GM12878 (cell line): ENCODE measurements at regions of chrX and their contacts with region 1.

Region 1: DNA sequence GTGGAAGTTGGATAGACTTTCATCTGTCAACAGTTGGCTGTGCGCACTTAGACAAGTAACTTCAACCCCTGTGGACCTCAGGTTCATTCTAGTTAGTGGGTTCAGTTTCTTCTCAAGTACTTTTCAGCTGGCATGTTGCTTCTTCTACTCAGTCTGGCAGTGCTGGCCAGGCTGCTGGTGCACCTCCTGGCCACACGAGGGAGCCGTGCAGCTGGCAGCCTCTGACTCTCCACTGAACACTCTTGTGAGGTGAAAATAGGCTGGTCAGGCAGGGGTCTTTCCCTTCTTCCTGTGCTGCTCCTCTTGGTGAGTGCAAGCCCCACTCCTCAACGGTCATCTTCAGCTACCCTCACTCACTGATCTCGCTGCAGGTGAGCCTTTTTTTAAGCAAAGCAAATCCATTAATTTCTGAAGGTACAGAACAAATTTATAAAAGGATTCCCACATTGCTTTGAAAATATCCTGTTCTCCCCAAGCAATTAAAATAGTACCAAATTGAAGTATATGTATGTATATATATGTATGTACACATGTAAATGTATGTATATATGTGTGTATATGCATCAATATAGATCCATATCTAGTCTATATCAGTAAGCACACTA is 30.6 kb downstream of the LONRF3 start:
- DNase-seq: no peak
- ATAC-seq: peak; percentile 98
- H3K4me3 ChIP-seq: no peak overlapping the region
- H3K27ac ChIP-seq: no peak overlapping the region
- H3K4me1 ChIP-seq: no peaks in the 10 kb centered on the region
- H3K27me3 ChIP-seq: no peaks in the 10 kb centered on the region; a peak in 1 of 4 replicates
- CTCF ChIP-seq: peak; percentile 88 to 99 (median 96)
- EP300 ChIP-seq: no peak
- POLR2A ChIP-seq: no peak
- RAD21 ChIP-seq: peak; percentile 63

Region 2: GRCh38 chrX:117894524-117894923 is 1110.5 kb before region 1 on chrX:
- CTCF ChIA-PET with region 1: no interaction called
- POLR2A ChIA-PET with region 1: no interaction called
- RAD21 ChIA-PET with region 1: no interaction called
- SMC1A ChIA-PET with region 1: no interaction called
- in situ Hi-C with region 1: no loop called
- intact Hi-C with region 1: no loop called
- DNase-seq: no peak
- ATAC-seq: no peak
- H3K4me3 ChIP-seq: no peak overlapping the region
- H3K27ac ChIP-seq: no peak overlapping the region
- H3K4me1 ChIP-seq: no peaks in the 10 kb centered on the region
- H3K27me3 ChIP-seq: no peaks in the 10 kb centered on the region
- CTCF ChIP-seq: no peak
- EP300 ChIP-seq: no peak
- POLR2A ChIP-seq: no peak
- RAD21 ChIP-seq: no peak

Region 3: DNA sequence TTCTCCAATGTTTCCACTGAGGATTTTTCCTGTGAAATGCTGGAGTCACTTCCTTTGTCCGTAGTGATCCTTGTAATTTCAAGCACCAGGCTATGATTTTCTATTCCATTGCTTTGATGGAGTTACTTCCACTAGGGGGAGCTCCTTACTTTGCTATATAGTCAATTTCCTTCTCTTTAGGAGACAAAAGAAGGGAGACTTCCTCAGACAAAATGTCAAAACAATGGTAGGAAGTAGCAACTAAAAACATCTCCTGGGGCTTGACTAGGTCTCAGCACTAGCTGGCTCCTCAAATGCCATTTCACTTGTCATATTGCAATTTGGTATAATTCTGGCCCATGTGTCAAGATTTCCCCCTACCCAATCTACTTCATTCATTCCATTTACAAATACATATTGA is 157.3 kb before region 1 on chrX:
- CTCF ChIA-PET with region 1: interaction called, 19 read pairs
- POLR2A ChIA-PET with region 1: no interaction called
- RAD21 ChIA-PET with region 1: interaction called, 3 read pairs
- SMC1A ChIA-PET with region 1: interaction called, 6 read pairs
- in situ Hi-C with region 1: loop called (anchors 5 kb)
- intact Hi-C with region 1: loop called (anchors 1 kb)
- DNase-seq: no peak
- ATAC-seq: peak; percentile 66
- H3K4me3 ChIP-seq: no peak overlapping the region
- H3K27ac ChIP-seq: no peak overlapping the region
- H3K4me1 ChIP-seq: no peaks in the 10 kb centered on the region
- H3K27me3 ChIP-seq: peaks cover 0 to 2% of the 10 kb centered on the region in 2 experiments; a peak in 1 of 4 replicates
- CTCF ChIP-seq: peak; percentile 64 to 67 (median 64)
- EP300 ChIP-seq: no peak
- POLR2A ChIP-seq: no peak
- RAD21 ChIP-seq: peak; percentile 74

Region 4: GRCh38 chrX:119067023-119067739 is 62.2 kb after region 1 on chrX:
- CTCF ChIA-PET with region 1: interaction called, 43 read pairs
- POLR2A ChIA-PET with region 1: no interaction called
- RAD21 ChIA-PET with region 1: interaction called, 5 read pairs
- SMC1A ChIA-PET with region 1: interaction called, 4 read pairs
- in situ Hi-C with region 1: no loop called
- intact Hi-C with region 1: loop called (anchors 1 kb)
- DNase-seq: no peak
- ATAC-seq: peak; percentile 80
- H3K4me3 ChIP-seq: no peak overlapping the region
- H3K27ac ChIP-seq: no peak overlapping the region
- H3K4me1 ChIP-seq: no peaks in the 10 kb centered on the region
- H3K27me3 ChIP-seq: peaks cover 0 to 2% of the 10 kb centered on the region in 2 experiments; a peak in 2 of 4 replicates
- CTCF ChIP-seq: peak in 2 of 3 experiments; percentile 47 to 51; a peak in 5 of 6 replicates
- EP300 ChIP-seq: no peak
- POLR2A ChIP-seq: no peak
- RAD21 ChIP-seq: peak; percentile 66